ENCODE measurements at regions of chr3 and their contacts with region 1.

Region 1: DNA sequence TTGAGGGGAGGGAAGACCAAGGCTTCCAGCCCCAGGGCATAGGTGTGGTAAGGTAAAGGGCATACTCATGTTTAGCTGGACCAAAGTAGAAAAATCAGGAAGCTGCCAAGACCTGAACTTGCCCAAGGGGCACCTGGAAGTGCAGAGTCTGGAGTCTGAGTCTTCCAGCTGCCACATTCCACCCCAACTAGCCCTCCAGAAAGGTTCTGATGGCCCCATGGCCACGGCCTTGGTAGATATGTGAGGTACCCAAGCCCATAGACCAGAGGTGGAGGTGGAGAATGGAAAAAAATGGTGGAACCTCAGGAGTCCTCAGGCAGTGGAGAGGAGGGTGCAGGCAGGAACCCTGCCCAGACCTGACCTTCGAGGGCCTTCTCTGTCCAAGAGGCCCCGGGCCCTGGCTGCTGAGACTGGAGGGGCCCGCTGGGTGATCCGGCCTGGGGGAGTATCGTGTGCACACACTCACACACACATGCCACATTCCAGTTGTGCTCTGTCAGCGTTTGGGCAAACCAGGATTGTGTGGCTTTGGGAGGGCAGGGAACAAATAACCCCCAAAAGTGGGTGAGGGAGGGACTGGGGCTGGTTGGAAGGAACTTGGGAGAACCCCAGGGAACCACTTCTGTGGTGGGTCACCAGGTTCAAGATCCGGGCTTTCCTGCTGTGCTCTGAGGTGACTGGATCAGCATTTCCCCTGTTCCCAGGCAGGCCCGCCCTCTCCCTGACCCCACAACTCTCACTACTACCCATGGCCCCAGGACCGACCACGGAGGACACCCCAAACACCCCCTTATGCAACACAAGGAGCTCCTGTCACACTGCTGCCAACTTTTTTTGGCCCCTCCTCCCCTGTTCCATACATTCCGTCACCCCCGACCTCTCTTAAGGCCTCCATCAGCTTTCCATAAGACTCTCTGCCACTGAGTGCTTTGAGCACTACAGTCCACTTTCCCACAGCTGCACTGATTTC is 11.6 kb downstream of the MYL3 start:
- DNase-seq: no peak
- ATAC-seq: no peak
- H3K4me3 Mint-ChIP-seq: no peak overlapping the region
- H3K27ac Mint-ChIP-seq: no peak overlapping the region
- H3K4me1 Mint-ChIP-seq: peaks cover 6% of the 10 kb centered on the region
- H3K27me3 Mint-ChIP-seq: peaks cover under 1% of the 10 kb centered on the region; the same call in 1 of the 2 replicates
- CTCF ChIP-seq: no peak

Region 2: GRCh38 chr3:46866720-46867549 is 15.3 kb after region 1 on chr3:
- CTCF ChIA-PET with region 1: interaction called, 10 read pairs
- POLR2A ChIA-PET with region 1: no interaction called
- DNase-seq: peak; percentile 90
- ATAC-seq: peak; percentile 69
- H3K4me3 Mint-ChIP-seq: no peak overlapping the region
- H3K27ac Mint-ChIP-seq: no peak overlapping the region
- H3K4me1 Mint-ChIP-seq: no peaks in the 10 kb centered on the region
- H3K27me3 Mint-ChIP-seq: no peaks in the 10 kb centered on the region
- CTCF ChIP-seq: peak; percentile 88

Measured in WTC11 (cell line).